Dendritic cell treated with granulocyte-macrophage colony-stimulating factor and Interleukin-4, amounts not matched to agents 40 ng/mL and 50 ng/mL, for 4 days (primary cell): ENCODE measurements at regions of chr11 and their contacts with region 1.

Region 1: GRCh38 chr11:46006418-46007070 is 84.1 kb downstream of the LARGE2 start:
- H3K4me3 Mint-ChIP-seq: no peak overlapping the region
- H3K27ac Mint-ChIP-seq: no peak overlapping the region
- H3K4me1 Mint-ChIP-seq: peaks cover 6% of the 10 kb centered on the region
- H3K27me3 Mint-ChIP-seq: no peaks in the 10 kb centered on the region

Region 2: GRCh38 chr11:45771566-45772448 is 234.7 kb before region 1 on chr11:
- intact Hi-C with region 1: loop called (anchors 5 kb)
- H3K4me3 Mint-ChIP-seq: peak overlapping the region; percentile 86
- H3K27ac Mint-ChIP-seq: peak overlapping the region; percentile 72
- H3K4me1 Mint-ChIP-seq: peaks cover 15% of the 10 kb centered on the region
- H3K27me3 Mint-ChIP-seq: peaks cover 22% of the 10 kb centered on the region

Region 3: DNA sequence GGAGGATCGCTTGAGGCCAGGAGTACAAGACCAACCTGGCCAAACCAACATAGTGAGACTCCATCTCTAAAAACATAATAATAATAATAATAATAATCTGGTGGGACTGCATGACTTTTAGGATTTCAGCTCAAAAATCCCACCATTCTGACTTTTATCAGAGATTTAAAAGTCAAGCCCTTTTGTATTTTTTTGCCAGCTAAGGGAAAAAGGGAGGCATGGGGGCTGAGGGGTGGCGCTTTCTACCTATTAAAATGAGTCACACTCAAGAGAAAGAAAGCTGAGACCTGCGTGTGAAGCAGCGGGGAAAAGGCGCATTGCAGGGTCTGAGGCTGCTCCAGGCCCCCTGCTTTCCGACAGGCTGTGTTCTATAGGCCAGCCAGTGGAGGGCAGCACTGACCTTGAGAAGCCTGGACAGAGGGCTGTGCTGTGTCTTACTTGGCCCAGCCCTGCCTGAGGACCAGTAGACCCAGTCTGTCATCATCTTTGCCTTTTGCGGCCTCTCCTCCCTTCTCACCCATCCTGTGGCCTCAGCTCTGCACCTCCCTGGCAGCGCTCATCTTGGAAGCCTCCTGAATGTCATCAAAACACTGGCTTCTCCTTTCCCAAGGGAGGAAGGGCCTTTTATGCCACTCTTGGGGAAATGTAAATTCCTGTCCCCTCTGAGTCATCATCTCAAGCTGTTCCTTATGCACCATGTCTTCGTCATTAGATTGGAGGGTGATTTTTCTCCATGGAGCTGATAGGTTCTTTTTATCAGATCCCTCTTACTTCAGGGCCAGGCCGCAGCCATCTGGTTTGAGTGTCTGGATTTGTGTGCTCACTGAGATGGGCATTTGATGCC is 133.8 kb before region 1 on chr11:
- intact Hi-C with region 1: loop called (anchors 2 kb)
- H3K4me3 Mint-ChIP-seq: no peak overlapping the region
- H3K27ac Mint-ChIP-seq: no peak overlapping the region
- H3K4me1 Mint-ChIP-seq: peaks cover 7% of the 10 kb centered on the region
- H3K27me3 Mint-ChIP-seq: no peaks in the 10 kb centered on the region

Region 4: DNA sequence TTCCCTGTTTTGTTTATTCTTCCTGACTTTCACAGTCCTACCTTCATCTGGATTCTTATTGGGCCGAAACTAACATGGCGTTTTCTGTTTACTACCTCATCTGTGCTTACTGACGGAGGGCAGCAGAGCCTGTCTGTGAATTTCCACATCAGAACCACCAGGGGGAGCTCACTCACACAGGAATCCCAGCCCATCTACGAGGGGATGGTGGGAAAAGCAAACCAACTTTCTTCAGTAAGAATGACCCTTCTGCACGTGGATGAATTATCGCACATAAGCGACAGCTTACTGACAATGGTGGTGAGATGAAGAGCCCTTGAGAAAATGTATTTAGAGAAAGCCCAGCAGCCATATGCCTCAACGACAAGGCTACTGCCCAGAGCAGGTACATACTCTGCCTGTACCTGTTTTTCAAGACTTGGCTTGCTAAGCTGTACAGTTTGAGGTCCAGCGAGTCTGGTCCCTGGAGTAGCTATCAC is 41.6 kb before region 1 on chr11:
- intact Hi-C with region 1: loop called (anchors 1 kb)
- H3K4me3 Mint-ChIP-seq: no peak overlapping the region
- H3K27ac Mint-ChIP-seq: no peak overlapping the region
- H3K4me1 Mint-ChIP-seq: peaks cover 9% of the 10 kb centered on the region
- H3K27me3 Mint-ChIP-seq: no peaks in the 10 kb centered on the region